ENCODE measurements at regions of chr1 and their contacts with region 1.

Region 1: DNA sequence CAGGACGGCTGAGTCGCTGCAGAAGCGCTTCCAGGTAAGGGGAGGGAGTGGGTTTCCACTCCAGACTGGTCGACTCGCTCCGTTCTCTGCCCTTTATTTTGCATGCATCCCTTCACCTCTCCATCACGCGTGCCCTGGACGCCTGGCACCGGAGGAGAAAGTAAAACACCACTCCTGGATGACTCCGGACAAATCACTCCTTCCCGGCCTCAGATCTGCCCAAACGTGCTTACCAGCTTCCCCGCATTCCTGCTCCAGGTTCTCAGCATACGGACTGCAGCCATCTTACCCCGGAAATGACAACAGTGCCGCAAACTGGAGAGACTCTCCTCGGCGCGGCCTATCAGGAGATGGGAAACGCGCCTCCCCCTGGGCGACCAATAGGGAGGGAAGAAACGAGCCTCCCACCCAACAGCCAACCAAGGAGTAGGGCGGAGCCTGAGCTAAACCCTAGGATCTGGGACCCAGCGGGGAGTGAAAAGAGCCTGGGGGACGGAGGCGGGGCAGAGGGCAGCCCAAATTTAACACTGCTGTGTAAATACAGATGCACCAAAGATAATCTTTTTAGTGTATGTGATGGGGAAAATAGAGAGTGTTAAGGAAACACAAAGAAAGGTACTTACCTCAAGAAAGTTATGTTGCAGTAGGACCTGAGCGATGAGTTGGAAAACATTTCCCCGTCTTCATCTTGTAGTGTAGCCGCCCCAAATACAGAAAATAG is at the start of gene DBT:
- DNase-seq: peak; percentile 90 to 96
- ATAC-seq: peak; percentile 100
- H3K4me3 ChIP-seq: peak within 1 kb of the TSS; percentile 58 to 97 (median 79)
- H3K27ac ChIP-seq: peak within 1 kb of the TSS in 9 of 10 donors; percentile 77 to 95 (median 88)
- H3K4me1 ChIP-seq: peaks cover 0 to 27% (median 19%) of the 10 kb centered on the region in 9 donors
- H3K27me3 ChIP-seq: no peaks in the 10 kb centered on the region
- CTCF ChIP-seq: no peak
- total RNA-seq, gene DBT: 27.9 to 49.0 (median 38.8) TPM

Region 2: DNA sequence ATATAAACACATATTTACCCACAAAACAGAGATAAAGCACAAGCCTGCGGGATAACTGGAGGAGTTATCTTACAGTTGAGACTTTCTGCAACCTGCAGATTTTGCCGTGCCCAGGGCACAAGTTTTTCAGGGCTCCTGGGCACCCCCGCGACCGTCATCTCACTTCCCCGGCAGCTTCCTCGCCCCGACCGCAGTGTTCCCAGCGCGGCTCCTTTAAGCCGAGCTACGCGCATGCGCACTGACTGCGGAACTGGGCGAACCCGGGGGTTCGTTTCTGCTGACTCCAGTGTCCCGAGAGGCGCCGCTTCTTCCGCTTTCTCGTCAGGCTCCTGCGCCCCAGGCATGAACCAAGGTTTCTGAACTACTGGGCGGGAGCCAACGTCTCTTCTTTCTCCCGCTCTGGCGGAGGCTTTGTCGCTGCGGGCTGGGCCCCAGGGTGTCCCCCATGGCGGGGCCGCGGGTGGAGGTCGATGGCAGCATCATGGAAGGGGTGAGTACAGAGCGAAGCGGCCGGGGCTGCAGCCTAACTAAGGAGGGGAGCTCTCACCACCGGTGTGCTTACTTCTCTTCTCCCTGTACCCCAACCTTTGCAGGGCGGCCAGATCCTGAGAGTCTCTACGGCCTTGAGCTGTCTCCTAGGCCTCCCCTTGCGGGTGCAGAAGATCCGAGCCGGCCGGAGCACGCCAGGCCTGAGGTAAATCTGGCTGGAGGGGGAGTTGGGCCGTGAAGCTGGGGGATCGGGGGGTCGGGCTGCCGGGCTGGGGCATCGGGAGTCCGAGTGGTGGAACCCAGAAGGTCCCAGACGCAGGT is 16.4 kb after region 1 on chr1 and contains the start of gene RTCA:
- intact Hi-C with region 1: loop called in 2 of 10 experiments (anchors 1 to 2 kb)
- DNase-seq: peak; percentile 96 to 98
- ATAC-seq: peak; percentile 99 to 100 (median 100)
- H3K4me3 ChIP-seq: peak within 1 kb of the TSS; percentile 59 to 99 (median 96)
- H3K27ac ChIP-seq: peak within 1 kb of the TSS in 9 of 10 donors; percentile 79 to 97 (median 88)
- H3K4me1 ChIP-seq: peaks cover 4 to 42% (median 35%) of the 10 kb centered on the region in 9 donors
- H3K27me3 ChIP-seq: no peaks in the 10 kb centered on the region
- CTCF ChIP-seq: no peak
- total RNA-seq, gene RTCA: 30.1 to 44.8 (median 36.9) TPM